ENCODE measurements at regions of chr7 and their contacts with region 1.

Region 1: DNA sequence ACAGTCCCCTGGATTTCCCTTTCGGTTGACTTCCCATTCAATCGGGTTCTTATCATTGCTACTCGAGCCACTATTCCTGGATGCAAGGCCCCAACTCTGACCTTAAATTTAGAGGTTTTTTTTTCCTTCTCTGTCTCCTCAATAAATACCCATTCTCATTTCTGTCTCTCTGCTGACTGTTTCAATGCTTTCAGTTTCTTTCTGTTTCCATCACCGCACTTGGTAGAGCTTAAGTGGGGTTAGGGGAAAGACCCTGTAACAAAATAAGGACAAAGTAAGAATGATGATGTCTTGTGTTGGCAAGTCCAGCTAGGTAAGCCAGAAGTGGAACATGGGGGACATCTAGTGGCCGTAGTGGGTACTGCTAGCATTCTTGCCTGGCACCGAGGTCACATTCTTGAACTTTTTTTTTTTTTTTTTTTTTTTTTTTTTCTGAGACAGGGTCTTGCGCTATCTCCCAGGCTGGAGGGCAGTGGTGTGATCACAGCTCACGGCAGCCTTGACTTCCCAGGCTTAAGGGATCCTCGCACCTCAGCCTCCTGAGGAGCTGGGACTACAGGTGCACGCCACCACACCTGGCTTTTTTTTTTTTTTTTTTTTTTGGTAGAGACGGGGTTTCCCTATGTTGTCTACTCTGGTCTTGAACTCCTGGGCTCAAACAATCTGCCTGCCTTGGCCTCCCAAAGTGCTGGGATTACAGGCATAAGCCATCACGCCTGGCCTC is 40.3 kb downstream of the ZC3HC1 start:
- DNase-seq: peak; percentile 78 to 92 (median 87)
- ATAC-seq: peak; percentile 96
- H3K4me3 ChIP-seq: no peak overlapping the region
- H3K4me3 Mint-ChIP-seq: no peak overlapping the region
- H3K27ac ChIP-seq: no peak overlapping the region
- H3K27ac Mint-ChIP-seq: no peak overlapping the region
- H3K4me1 ChIP-seq: no peaks in the 10 kb centered on the region
- H3K4me1 Mint-ChIP-seq: peaks cover 2% of the 10 kb centered on the region
- H3K27me3 ChIP-seq: no peaks in the 10 kb centered on the region
- H3K27me3 Mint-ChIP-seq: no peaks in the 10 kb centered on the region
- CTCF ChIP-seq: peak; percentile 79

Region 2: DNA sequence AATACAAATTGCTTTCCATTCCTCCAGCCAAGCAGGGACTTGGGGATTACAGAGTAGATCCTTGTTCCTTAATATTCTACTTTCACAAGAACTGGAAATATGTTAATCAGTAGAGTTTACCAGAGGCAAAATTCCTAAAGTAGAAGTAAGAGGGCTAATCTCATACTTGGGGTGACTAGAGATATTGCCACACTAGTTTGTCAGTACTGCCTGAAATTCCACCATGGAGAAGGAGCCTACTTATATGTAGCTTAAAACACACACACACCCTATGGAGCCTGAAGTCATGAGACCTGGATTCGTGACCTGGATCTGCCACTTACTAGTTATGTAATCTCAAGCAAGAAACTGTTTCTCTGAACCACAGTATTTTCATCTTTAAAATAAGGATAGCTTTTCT is 542.8 kb before region 1 on chr7:
- CTCF ChIA-PET with region 1: no interaction called
- POLR2A ChIA-PET with region 1: no interaction called
- intact Hi-C with region 1: loop called in 1 of 2 experiments (anchors 2 kb)
- DNase-seq: no peak
- ATAC-seq: no peak
- H3K4me3 ChIP-seq: no peak overlapping the region
- H3K4me3 Mint-ChIP-seq: no peak overlapping the region
- H3K27ac ChIP-seq: no peak overlapping the region
- H3K27ac Mint-ChIP-seq: no peak overlapping the region
- H3K4me1 ChIP-seq: no peaks in the 10 kb centered on the region
- H3K4me1 Mint-ChIP-seq: peaks cover 2% of the 10 kb centered on the region
- H3K27me3 ChIP-seq: no peaks in the 10 kb centered on the region
- H3K27me3 Mint-ChIP-seq: no peaks in the 10 kb centered on the region
- CTCF ChIP-seq: no peak

Region 3: DNA sequence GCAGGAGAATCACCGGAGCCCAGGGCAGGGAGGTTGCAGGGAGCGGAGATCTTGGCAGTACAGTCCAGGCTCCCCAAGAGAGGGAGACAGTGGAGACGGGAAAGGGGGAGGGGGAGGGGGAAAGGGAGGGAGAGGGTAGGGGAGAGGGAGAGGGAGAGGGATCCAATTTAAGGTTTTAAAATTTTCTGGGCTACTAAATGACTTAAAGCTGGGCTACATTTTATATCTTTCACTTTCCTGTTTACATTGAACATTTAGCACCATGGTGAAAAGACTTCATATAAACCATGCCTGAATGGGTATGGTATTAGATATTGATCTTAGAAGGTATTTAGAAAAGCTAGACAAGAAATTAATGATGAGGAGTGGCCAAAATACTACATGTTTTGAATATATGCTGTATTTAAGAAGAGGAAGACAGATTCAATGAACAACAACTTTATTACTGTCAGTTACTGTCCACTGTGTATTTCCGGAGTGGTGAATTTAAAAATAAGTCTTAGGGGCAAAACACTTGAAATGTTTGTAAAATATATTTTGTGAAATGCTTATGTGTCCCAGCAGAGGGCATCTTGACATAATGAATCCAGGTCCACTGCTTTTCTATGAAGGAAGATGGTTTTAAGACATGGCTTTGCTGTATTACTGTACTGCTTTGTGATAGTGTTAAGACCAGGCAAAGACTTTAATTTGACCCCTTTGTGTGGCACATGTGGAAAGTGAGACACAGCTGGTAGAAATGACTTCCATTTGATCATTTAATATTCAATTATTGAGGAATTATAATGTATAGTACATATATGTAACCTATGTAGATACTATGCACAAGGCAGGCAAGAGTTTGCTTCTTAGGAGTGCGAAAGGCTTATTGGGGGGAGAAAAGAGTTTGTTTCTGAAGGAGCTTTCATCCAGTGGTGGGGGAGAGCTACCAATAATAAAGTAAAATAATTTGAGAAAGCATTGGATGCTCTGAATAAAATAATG is 346.5 kb before region 1 on chr7:
- CTCF ChIA-PET with region 1: interaction called, 3 read pairs
- POLR2A ChIA-PET with region 1: no interaction called
- intact Hi-C with region 1: loop called in 1 of 2 experiments (anchors 2 kb)
- DNase-seq: peak in 2 of 9 experiments; percentile 15 to 31
- ATAC-seq: no peak
- H3K4me3 ChIP-seq: no peak overlapping the region
- H3K4me3 Mint-ChIP-seq: no peak overlapping the region
- H3K27ac ChIP-seq: no peak overlapping the region
- H3K27ac Mint-ChIP-seq: no peak overlapping the region
- H3K4me1 ChIP-seq: no peaks in the 10 kb centered on the region
- H3K4me1 Mint-ChIP-seq: peaks cover 7% of the 10 kb centered on the region
- H3K27me3 ChIP-seq: no peaks in the 10 kb centered on the region
- H3K27me3 Mint-ChIP-seq: no peaks in the 10 kb centered on the region
- CTCF ChIP-seq: no peak

Region 4: GRCh38 chr7:129741743-129742213 is 269.1 kb before region 1 on chr7:
- CTCF ChIA-PET with region 1: interaction called, 3 read pairs
- POLR2A ChIA-PET with region 1: no interaction called
- intact Hi-C with region 1: loop called in 1 of 2 experiments (anchors 10 kb)
- DNase-seq: no peak
- ATAC-seq: no peak
- H3K4me3 ChIP-seq: no peak overlapping the region
- H3K4me3 Mint-ChIP-seq: no peak overlapping the region
- H3K27ac ChIP-seq: no peak overlapping the region
- H3K27ac Mint-ChIP-seq: no peak overlapping the region
- H3K4me1 ChIP-seq: no peaks in the 10 kb centered on the region
- H3K4me1 Mint-ChIP-seq: no peaks in the 10 kb centered on the region
- H3K27me3 ChIP-seq: no peaks in the 10 kb centered on the region
- H3K27me3 Mint-ChIP-seq: no peaks in the 10 kb centered on the region
- CTCF ChIP-seq: no peak

Region 5: DNA sequence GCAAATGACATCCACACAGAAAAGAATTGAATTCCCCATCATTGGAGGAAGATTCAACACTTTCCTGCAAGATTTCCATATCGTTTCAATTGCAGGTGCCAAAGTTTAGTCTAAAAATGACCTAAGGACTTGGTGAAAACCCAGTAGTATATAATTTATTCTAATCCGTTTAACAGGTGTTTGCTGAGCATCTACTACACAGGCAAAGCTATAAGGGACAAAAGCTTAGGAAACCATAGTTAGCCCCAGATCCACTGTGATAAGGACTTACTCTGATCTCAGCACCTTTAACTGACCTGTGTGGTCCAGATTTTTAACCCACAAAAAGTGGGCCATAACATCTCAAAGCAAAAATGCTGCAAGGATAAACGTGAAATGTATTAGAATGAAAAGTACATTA is 77.2 kb before region 1 on chr7:
- CTCF ChIA-PET with region 1: no interaction called
- POLR2A ChIA-PET with region 1: no interaction called
- intact Hi-C with region 1: loop called in 1 of 2 experiments (anchors 5 kb)
- DNase-seq: no peak
- ATAC-seq: no peak
- H3K4me3 ChIP-seq: no peak overlapping the region
- H3K4me3 Mint-ChIP-seq: no peak overlapping the region
- H3K27ac ChIP-seq: no peak overlapping the region
- H3K27ac Mint-ChIP-seq: no peak overlapping the region
- H3K4me1 ChIP-seq: no peaks in the 10 kb centered on the region
- H3K4me1 Mint-ChIP-seq: peaks cover 17% of the 10 kb centered on the region
- H3K27me3 ChIP-seq: no peaks in the 10 kb centered on the region
- H3K27me3 Mint-ChIP-seq: no peaks in the 10 kb centered on the region
- CTCF ChIP-seq: no peak

Region 6: GRCh38 chr7:130127821-130128317 is 117.0 kb after region 1 on chr7:
- CTCF ChIA-PET with region 1: no interaction called
- POLR2A ChIA-PET with region 1: no interaction called
- intact Hi-C with region 1: no loop called
- DNase-seq: no peak
- ATAC-seq: no peak
- H3K4me3 ChIP-seq: no peak overlapping the region
- H3K4me3 Mint-ChIP-seq: no peak overlapping the region
- H3K27ac ChIP-seq: no peak overlapping the region
- H3K27ac Mint-ChIP-seq: no peak overlapping the region
- H3K4me1 ChIP-seq: no peaks in the 10 kb centered on the region
- H3K4me1 Mint-ChIP-seq: no peaks in the 10 kb centered on the region
- H3K27me3 ChIP-seq: no peaks in the 10 kb centered on the region
- H3K27me3 Mint-ChIP-seq: no peaks in the 10 kb centered on the region
- CTCF ChIP-seq: no peak

Measured in CD8-positive, alpha-beta T cell (primary cell).